SK-N-SH (cell line): ENCODE measurements at regions of chr1 and their contacts with region 1.

Region 1: DNA sequence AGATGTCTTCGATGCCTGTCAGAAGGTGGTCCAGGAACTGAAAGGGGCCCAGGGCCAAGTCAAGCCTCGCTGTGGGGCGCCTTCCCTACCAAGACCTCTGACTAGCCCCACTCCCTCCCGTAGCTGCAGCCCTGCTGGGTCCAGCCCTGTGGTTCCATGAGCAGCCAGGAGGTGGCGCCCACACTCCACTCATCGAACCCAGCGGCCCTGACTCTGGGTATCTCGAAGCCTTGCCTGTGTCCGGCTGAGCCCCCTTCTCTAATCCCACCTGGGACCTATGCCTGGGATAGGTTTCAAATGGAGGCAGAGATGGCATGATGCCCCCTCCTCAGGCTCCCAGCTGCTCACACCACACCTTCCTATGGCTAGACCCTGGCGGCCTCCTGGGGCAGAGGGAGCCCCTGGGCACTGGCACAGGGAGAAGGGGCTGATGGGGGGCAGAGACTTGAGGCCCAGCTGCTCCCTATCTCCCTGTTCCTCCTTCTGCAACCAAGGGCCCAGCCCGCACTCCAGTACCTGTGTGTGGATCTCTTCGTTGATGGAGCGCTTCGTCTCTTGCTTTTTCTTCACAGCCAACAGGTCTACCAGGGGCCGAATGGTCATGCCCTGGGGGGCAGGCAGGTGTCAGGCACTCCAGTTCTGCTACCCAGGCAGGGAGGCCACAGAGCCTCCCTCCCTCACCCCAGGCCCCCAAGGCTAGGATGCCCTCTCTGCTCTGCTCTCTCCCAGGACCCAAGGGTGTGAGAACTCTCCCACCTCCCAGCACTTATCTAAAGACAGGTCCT is 52.0 kb downstream of the SLC9A1 start:
- DNase-seq: peak; percentile 93
- H3K4me3 ChIP-seq: no peak overlapping the region; a peak in 1 of 4 replicates
- H3K27ac ChIP-seq: no peak overlapping the region
- H3K4me1 ChIP-seq: peaks cover 15 to 19% of the 10 kb centered on the region in 2 experiments; a peak in 3 of 4 replicates
- H3K27me3 ChIP-seq: no peaks in the 10 kb centered on the region
- CTCF ChIP-seq: peak; percentile 95
- EP300 ChIP-seq: no peak
- RAD21 ChIP-seq: peak; percentile 93

Region 2: DNA sequence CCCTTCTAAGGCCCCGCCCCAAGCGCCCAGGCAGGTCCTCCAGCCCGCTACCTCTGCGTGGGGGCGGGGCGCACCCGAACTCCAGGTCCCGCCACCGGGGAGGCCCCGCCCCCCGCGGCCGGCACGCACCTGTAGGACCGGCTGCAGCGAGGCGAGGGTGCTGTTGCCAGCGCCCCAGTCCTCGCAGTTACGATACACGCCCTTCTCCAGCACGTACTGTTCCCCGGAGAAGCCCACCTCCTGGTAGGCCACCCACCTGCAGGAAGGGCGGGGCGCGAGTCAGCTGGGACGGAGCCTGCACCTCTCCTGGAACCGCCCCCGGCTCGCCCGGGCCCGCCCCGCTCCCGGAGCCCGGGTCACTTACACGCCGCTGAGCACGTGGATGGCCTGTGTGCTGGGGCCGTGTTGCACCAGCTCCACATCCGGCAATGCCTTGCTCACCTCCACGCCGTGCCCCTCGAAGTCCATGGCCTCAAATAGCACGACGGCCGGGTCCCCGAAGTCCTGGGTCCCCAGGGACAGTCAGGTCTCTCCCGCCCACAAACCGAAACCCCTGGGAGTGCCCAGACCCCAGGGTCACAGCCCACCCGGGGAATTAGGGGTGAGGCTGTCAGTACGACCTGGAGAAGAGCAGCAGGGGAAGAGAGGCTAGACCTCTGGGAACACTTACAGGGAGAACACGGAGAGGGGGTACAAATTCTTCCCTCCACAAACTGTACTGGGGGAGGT is 766.3 kb before region 1 on chr1:
- CTCF ChIA-PET with region 1: no interaction called
- POLR2A ChIA-PET with region 1: no interaction called
- DNase-seq: peak; percentile 91
- H3K4me3 ChIP-seq: peak overlapping the region; percentile 61 to 65
- H3K27ac ChIP-seq: no peak overlapping the region
- H3K4me1 ChIP-seq: no peaks in the 10 kb centered on the region; a peak in 1 of 4 replicates
- H3K27me3 ChIP-seq: no peaks in the 10 kb centered on the region
- CTCF ChIP-seq: no peak
- EP300 ChIP-seq: no peak
- RAD21 ChIP-seq: no peak

Region 3: DNA sequence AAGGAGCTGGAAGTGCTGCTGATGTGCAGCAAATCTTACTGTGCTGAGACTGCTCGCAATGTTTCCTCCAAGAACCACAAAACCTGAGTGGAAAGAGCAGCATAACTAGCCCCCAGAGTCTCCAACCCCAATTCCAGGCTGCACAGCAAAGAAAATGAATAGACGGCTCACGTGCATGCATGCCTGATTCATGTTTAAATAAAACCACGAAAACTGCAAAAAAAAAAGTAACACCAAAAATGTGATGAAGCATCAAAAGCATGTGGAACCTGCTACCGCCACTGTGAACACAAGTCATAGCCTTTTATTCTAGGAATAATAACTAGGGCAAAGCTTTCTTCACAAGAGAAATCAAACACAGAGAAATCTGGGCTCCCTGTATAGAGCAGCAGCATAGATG is 119.0 kb before region 1 on chr1:
- CTCF ChIA-PET with region 1: no interaction called
- POLR2A ChIA-PET with region 1: no interaction called
- DNase-seq: no peak
- H3K4me3 ChIP-seq: no peak overlapping the region
- H3K27ac ChIP-seq: no peak overlapping the region
- H3K4me1 ChIP-seq: no peaks in the 10 kb centered on the region
- H3K27me3 ChIP-seq: no peaks in the 10 kb centered on the region; the same call in 1 of the 2 replicates
- CTCF ChIP-seq: no peak
- EP300 ChIP-seq: no peak
- RAD21 ChIP-seq: no peak

Region 4: GRCh38 chr1:26998429-26999300 is 104.2 kb before region 1 on chr1:
- CTCF ChIA-PET with region 1: interaction called, 12 read pairs
- POLR2A ChIA-PET with region 1: no interaction called
- DNase-seq: no peak
- H3K4me3 ChIP-seq: no peak overlapping the region
- H3K27ac ChIP-seq: peak overlapping the region in 1 of 2 experiments; percentile 92; a peak in 2 of 4 replicates
- H3K4me1 ChIP-seq: peaks cover 8 to 30% of the 10 kb centered on the region in 2 experiments; a peak in 3 of 4 replicates
- H3K27me3 ChIP-seq: no peaks in the 10 kb centered on the region
- CTCF ChIP-seq: no peak
- EP300 ChIP-seq: no peak
- RAD21 ChIP-seq: no peak

Region 5: DNA sequence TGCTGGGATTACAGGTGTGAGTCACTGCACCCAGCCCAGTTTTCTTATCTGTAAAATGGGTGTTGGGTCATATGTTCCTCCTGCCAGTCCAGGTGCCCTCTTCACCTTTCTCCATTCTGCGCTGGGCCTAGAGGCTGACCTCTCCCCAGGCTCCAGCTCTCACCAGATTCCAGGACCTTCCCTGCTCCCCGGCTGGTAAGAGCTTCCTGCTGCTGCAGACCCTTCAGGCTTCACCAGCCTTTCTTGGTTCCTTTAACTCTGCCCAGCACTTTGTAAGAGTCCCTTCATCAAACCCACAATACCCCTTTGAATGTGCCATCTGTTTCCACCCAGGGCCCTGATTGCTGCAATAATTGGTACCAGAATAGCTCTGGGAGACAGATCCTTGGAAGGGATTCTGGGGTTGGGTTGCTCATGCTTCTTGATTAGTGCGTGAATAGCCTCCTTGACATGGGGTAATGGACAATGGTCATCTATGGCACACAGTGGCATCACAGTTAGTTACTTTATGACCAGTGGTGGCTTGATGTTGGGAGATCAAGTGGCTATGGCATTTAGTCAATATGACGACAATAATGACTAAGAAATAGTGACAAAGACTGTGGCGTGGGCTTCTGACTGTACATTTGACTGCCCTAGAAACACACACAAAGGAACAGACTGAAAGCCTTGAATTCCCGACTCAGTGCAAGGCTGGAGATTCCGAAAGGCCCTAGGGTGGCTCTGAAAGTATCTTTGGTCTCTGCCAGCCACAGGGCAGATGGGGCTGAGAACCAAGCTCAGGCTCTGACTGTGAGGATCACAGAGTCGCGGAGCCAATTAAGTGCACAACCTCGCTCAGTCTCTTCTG is 15.3 kb before region 1 on chr1:
- CTCF ChIA-PET with region 1: interaction called, 19 read pairs
- POLR2A ChIA-PET with region 1: no interaction called
- DNase-seq: no peak
- H3K4me3 ChIP-seq: no peak overlapping the region
- H3K27ac ChIP-seq: no peak overlapping the region
- H3K4me1 ChIP-seq: no peaks in the 10 kb centered on the region
- H3K27me3 ChIP-seq: peaks cover 18% of the 10 kb centered on the region; the same call in 1 of the 2 replicates
- CTCF ChIP-seq: no peak
- EP300 ChIP-seq: no peak
- RAD21 ChIP-seq: no peak

Region 6: DNA sequence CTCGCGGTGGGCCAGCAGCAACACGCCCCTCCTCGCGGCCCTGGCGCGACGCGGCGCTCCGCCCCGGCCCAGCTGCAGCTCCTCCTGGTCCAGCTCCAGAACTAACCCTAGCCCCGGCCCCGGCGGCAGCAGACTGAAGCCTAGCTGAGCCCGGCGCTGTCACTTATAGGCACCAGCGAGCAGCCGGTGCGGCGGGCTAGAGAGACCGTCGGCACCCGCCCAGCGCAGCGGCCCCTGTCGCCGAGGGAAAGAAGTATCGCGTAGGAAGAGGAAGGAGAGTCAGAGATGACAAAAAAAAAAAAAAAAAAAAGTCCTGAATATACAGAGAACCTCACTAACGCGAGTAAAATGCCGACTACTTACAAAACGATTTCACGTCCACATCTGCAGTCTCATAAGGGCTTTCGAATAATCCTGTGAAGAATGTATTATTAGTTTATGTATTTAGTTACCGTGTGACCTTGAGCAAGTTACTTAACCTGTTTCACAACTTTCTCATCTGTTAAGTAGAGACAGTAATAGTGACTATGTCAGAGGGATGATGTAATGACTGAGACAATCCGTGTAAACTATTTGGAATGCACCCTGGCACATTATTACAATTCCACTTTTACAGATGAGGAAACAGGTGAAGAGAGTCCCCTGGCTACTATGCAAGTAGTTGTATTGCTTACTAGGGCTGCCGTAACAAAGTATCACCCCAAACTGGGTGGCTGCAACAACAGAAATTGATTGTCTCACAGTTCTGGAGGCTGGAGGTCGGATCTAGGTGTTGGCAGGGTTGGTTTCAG is 52.3 kb after region 1 on chr1 and contains the start of gene SLC9A1:
- CTCF ChIA-PET with region 1: interaction called, 14 read pairs
- POLR2A ChIA-PET with region 1: no interaction called
- DNase-seq: peak; percentile 94
- H3K4me3 ChIP-seq: peak within 1 kb of the TSS; percentile 69 to 72
- H3K27ac ChIP-seq: peak within 1 kb of the TSS; percentile 34 to 59; a peak in 3 of 4 replicates
- H3K4me1 ChIP-seq: peaks cover 17 to 40% of the 10 kb centered on the region in 2 experiments; a peak in 2 of 4 replicates
- H3K27me3 ChIP-seq: no peaks in the 10 kb centered on the region
- CTCF ChIP-seq: peak; percentile 79
- EP300 ChIP-seq: peak in 1 of 2 experiments; percentile 42; a peak in 1 of 4 replicates
- RAD21 ChIP-seq: peak; percentile 27; the same call in 1 of the 2 replicates
- polyA plus RNA-seq, gene SLC9A1: 5.6 and 11.4 TPM in 2 replicates

Region 7: GRCh38 chr1:27284425-27285273 is 181.8 kb after region 1 on chr1:
- CTCF ChIA-PET with region 1: interaction called, 149 read pairs
- POLR2A ChIA-PET with region 1: no interaction called
- DNase-seq: peak; percentile 84
- H3K4me3 ChIP-seq: no peak overlapping the region; a peak in 1 of 4 replicates
- H3K27ac ChIP-seq: no peak overlapping the region
- H3K4me1 ChIP-seq: no peaks in the 10 kb centered on the region
- H3K27me3 ChIP-seq: no peaks in the 10 kb centered on the region
- CTCF ChIP-seq: peak; percentile 90
- EP300 ChIP-seq: no peak
- RAD21 ChIP-seq: peak; percentile 80